HEK293T (cell line): ENCODE measurements at regions of chr14 and their contacts with region 1.

Region 1: GRCh38 chr14:20682435-20683124 is 1.8 kb upstream of the RNASE4 start:
- DNase-seq: peak; percentile 67

Region 2: GRCh38 chr14:20461274-20462001 is 221.1 kb before region 1 on chr14 and contains the start of gene PIP4P1:
- CTCF ChIA-PET with region 1: no interaction called
- POLR2A ChIA-PET with region 1: interaction called, 10 read pairs
- DNase-seq: peak; percentile 90

Region 3: DNA sequence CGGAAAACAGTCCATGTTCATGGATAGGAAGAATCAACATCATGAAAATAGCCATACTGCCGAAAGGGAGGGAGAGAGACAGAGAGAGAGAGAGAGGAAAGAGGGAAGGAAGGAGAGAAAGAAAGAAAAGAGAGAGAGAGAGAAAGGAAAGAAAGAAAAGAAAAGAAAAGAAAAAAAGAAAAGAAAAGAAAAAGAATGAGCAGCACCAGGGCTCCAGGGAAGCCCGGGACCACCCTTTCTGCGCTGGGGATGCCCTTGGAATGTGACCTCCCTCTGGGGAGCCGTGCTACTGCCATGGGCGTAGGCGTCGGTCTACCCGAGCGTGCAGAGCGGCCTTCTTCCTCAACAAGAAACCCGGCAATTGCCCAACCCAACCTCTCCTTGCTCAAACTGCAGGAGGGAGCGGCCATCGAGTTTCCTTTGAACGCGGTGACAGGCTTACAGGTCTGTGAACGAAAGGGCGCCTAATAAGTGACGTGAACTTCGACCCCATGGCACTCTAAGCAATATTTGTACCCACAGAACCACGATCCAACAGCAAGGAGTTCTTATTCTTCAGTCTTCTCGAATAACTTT is 58.0 kb before region 1 on chr14:
- CTCF ChIA-PET with region 1: no interaction called
- POLR2A ChIA-PET with region 1: interaction called, 80 read pairs
- DNase-seq: peak; percentile 48

Region 4: GRCh38 chr14:20652996-20653975 is 29.3 kb before region 1 on chr14:
- CTCF ChIA-PET with region 1: interaction called, 12 read pairs
- POLR2A ChIA-PET with region 1: interaction called, 82 read pairs
- DNase-seq: peak; percentile 66

Region 5: GRCh38 chr14:20970983-20971704 is 288.6 kb after region 1 on chr14:
- CTCF ChIA-PET with region 1: interaction called, 5 read pairs
- POLR2A ChIA-PET with region 1: interaction called, 10 read pairs
- DNase-seq: peak; percentile 85